CD14-positive monocyte (primary cell): ENCODE measurements at regions of chr10 and their contacts with region 1.

Region 1: DNA sequence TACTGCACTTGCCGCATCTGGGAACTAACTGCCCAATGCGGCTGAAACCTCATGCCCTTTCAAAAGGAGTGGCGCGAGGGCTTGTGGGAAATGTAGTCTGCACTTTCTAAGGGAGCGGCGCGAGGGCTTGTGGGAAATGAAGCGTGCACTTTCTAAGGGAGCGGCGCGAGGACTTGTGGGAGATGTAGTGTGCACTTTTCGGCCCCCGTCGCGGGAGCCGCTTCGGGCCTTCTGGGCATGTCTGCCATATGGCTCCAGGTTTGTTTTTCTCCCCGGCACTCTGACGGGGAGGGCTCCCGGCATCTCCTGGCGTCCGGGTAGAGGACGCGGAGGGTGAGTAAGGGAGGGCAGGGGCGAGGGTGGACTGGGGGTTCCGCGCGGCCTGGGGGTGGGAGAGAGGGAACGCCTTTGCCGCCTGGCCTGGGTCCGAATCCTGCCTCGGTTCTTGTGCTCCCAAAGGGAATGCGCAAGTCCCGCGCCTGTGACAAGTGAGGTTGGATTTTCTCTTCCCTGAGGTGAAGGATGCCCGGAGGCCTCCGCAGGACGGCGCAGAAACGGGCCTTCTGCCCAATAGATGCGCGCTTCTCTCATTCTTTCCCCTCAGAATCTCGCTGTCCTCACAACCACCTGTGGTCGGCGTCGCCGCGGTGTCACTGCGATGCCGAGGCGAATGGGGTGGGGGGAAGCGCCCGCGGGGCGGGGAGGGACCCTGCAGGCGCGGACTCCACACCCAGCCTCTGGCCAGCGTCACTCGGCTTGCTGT is at the start of gene ZNF37A:
- DNase-seq: peak; percentile 87 to 92 (median 90)
- H3K4me3 ChIP-seq: peak within 1 kb of the TSS; percentile 48 to 90 (median 71)
- H3K4me3 Mint-ChIP-seq: peak within 1 kb of the TSS; percentile 88 to 92
- H3K27ac ChIP-seq: peak within 1 kb of the TSS; percentile 37 to 87
- H3K27ac Mint-ChIP-seq: peak within 1 kb of the TSS; percentile 67 to 94 (median 88)
- H3K4me1 ChIP-seq: peaks cover 13 to 21% of the 10 kb centered on the region in 2 donors
- H3K4me1 Mint-ChIP-seq: peaks cover 16% of the 10 kb centered on the region
- H3K27me3 ChIP-seq: no peaks in the 10 kb centered on the region
- H3K27me3 Mint-ChIP-seq: peaks cover 0 to 2% (median 0%) of the 10 kb centered on the region in 3 donors
- CTCF ChIP-seq: no peak
- polyA plus RNA-seq, gene ZNF37A: 0.25 to 3.4 (median 1.6) TPM

Region 2: DNA sequence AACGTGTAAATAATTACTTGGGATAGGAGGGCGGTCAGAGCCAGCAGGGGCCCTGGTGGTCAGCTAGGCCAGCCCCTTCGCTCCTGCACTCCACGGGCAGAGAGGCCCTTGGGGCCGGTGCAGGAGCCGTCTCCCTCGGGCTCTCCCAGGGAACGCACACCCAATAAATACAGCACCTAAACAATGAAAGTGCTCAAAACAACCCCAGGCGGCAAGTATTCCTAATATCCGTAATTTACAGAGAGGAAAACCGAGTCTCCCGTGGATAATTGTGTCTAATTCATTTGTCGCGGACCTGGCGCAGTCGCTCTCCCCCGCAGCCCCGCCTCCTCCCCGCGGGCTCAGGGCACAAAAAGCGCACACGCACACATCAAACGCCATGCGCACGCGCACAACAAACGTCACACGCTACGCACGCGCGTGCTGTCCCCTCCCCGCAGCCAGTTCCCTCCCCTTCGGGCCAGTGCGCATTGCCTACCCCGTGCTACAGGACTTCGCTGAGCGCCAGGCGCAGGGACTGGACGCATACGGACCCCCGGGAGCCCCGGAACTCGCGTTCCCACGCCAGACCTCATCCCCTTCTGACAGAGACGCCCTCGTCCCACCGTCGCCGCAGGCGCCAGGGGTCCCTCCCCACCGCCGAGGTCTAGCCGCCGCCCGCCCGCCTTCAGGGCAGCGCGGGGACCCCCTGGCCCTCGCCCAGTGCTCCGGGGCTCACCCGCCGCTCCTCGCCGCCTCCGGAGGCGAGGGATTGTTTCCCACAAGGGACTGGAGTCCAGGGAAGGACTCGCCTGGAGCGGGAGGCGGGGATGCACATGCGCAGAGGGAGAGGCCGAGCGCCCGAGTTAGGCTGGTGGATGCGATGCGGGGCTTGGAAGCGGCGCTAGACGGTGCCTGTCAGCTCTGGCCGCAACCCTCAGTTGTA is 236.8 kb before region 1 on chr10 and contains the start of gene ZNF248:
- intact Hi-C with region 1: loop called (anchors 5 kb)
- DNase-seq: peak; percentile 96 to 97 (median 96)
- H3K4me3 ChIP-seq: peak within 1 kb of the TSS; percentile 65 to 83 (median 67)
- H3K4me3 Mint-ChIP-seq: peak within 1 kb of the TSS; percentile 85 to 97
- H3K27ac ChIP-seq: peak within 1 kb of the TSS; percentile 53 to 96
- H3K27ac Mint-ChIP-seq: peak within 1 kb of the TSS; percentile 85 to 96 (median 94)
- H3K4me1 ChIP-seq: peaks cover 11 to 17% of the 10 kb centered on the region in 2 donors
- H3K4me1 Mint-ChIP-seq: peaks cover 19% of the 10 kb centered on the region
- H3K27me3 ChIP-seq: no peaks in the 10 kb centered on the region
- H3K27me3 Mint-ChIP-seq: peaks cover 0 to 9% (median 0%) of the 10 kb centered on the region in 3 donors
- CTCF ChIP-seq: no peak
- polyA plus RNA-seq, gene ZNF248: 0.44 to 2.2 (median 0.94) TPM

Region 3: GRCh38 chr10:37976091-37976879 is 118.1 kb before region 1 on chr10 and contains the start of gene ZNF25:
- intact Hi-C with region 1: loop called (anchors 1 to 5 kb)
- DNase-seq: peak; percentile 98 to 99 (median 98)
- H3K4me3 ChIP-seq: peak within 1 kb of the TSS; percentile 63 to 86 (median 63)
- H3K4me3 Mint-ChIP-seq: peak within 1 kb of the TSS; percentile 89 to 95
- H3K27ac ChIP-seq: peak within 1 kb of the TSS; percentile 52 to 93
- H3K27ac Mint-ChIP-seq: peak within 1 kb of the TSS; percentile 89 to 96 (median 92)
- H3K4me1 ChIP-seq: peaks cover 7 to 15% of the 10 kb centered on the region in 2 donors
- H3K4me1 Mint-ChIP-seq: peaks cover 20% of the 10 kb centered on the region
- H3K27me3 ChIP-seq: no peaks in the 10 kb centered on the region
- H3K27me3 Mint-ChIP-seq: peaks cover 0 to 3% (median 0%) of the 10 kb centered on the region in 3 donors
- CTCF ChIP-seq: peak; percentile 88
- polyA plus RNA-seq, gene ZNF25: 5.5 to 6.7 (median 6.2) TPM

Region 4: DNA sequence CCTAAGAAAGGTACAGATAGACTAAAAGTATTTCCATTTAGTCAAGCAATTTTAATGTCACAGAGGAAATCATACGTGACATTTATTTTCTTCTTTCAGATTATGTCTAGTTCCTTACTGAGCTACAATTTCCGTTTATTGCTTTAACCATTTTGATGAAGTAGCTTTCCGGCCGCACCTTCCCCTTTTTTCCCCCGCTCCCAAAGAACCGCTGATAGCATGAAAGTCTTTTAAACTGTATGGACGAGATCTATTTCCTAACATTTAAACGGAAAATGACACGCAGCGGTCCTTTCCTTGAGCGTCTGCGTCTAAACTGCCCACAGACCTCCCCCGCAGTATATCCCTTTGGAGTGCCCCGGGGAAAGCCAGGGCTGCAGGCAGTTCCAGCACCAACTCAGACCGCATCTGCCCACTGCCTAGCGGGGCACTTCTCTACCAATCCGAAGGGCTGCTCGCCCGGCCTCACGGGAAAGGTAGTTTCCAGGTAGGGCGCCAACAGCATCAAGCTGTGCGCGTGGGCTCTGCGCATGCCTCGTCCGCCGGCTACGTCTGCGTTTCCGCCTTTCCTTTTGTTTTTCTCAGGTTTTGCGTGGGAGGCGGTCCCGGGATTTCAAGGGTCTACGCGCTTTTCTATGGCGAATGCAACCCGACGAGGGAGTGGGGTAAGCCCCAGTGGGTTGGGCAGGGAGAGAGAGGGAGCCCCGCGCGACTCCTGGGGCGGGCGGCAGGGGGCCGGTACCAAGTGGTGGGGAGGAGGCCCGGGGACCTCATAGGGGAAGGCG is 84.0 kb before region 1 on chr10 and contains the start of gene ZNF33A:
- intact Hi-C with region 1: loop called (anchors 10 kb)
- DNase-seq: peak; percentile 69 to 83 (median 82)
- H3K4me3 ChIP-seq: peak within 1 kb of the TSS; percentile 67 to 96 (median 92)
- H3K4me3 Mint-ChIP-seq: peak within 1 kb of the TSS; percentile 92 to 96
- H3K27ac ChIP-seq: peak within 1 kb of the TSS; percentile 99
- H3K27ac Mint-ChIP-seq: peak within 1 kb of the TSS; percentile 96 to 99 (median 98)
- H3K4me1 ChIP-seq: peaks cover 26 to 34% of the 10 kb centered on the region in 2 donors
- H3K4me1 Mint-ChIP-seq: peaks cover 32% of the 10 kb centered on the region
- H3K27me3 ChIP-seq: no peaks in the 10 kb centered on the region
- H3K27me3 Mint-ChIP-seq: peaks cover 0 to 3% (median 0%) of the 10 kb centered on the region in 3 donors
- CTCF ChIP-seq: no peak
- polyA plus RNA-seq, gene ZNF33A: 10.0 to 24.8 (median 10.3) TPM